ENCODE measurements at regions of chr6 and their contacts with region 1.

Region 1: DNA sequence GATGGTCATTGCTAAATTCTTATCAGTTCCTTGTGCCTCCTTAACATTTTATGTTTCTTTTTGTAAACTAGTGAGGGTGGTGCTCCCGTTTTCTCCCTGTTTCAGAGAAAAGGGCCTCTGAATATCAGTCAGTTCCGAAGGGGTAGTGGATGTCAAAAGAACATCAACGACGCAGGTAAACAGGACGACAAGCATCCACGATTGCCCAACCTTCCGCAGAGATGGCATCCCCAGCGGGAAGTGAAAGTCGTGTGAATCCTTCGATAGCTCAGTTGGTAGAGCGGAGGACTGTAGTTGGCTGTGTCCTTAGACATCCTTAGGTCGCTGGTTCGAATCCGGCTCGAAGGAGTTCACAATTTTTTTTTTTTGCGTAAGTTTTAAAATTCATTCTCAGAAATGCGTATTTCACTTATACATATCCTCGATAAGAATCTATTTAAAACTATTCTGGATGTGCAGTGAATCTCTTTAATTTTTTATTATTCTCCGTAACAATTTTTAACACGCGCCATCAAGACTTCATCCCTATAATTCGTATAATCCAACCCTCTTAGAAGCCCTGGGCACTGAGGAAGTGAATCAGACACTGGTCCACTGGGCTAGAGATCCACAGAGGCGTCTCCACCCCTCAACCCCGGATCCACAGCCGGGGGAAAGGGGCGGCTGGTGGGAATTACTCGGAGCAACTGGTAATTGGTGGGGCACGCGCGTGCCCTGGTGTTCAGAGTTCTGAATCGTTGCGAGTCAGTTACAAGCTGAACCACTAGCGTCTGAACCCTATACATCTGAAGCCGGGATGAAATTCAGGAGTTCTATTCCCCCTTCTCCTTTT is 27.9 kb upstream of the ABT1 start:
- DNase-seq: peak; percentile 96
- H3K4me3 Mint-ChIP-seq: peak overlapping the region; percentile 85
- H3K27ac Mint-ChIP-seq: peak overlapping the region; percentile 76
- H3K4me1 Mint-ChIP-seq: peaks cover 6% of the 10 kb centered on the region
- H3K27me3 Mint-ChIP-seq: no peaks in the 10 kb centered on the region
- CTCF ChIP-seq: no peak

Region 2: DNA sequence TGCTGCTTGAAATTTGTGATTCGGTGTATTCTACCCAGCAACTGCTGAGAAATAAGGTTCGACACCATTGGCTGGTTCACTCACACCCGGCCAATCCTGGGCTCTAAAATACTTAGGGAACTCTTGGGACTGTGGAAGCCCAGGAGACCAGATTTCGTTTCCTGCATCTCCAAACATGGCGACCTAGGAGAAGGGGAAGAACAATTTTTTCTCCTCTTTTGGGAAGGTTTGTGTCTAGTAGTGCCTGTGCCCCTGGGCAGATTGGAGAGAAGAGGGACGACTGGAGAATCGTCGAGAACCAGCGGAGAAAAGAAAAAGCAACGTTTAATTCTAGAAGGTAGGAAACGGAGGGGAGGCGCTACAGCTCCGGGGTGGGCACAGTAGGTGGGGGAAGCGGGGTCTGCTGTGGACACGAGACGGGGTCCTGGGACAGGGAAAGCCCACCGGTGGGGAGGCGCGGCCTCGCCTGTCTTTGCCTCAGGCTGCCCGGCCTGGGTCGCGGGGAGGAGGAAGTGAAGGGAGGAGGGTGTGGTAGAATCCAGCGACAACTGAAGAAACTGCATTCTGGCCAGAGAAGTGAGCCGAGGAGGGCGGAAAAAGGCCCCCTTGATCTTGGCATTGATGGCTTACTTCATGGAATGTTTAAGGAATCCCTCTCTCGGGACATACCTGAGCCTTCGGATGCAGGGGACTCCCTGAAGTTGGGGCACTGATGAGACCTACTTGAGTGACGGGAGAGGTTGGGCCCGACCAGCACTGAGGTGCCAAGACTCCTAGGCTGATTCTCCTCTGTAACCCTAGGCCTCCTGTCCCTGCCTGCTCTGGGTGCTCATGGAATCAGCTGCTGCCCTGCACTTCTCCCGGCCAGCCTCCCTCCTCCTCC is 110.8 kb before region 1 on chr6 and contains the start of gene BTN2A1:
- CTCF ChIA-PET with region 1: no interaction called
- POLR2A ChIA-PET with region 1: no interaction called
- intact Hi-C with region 1: loop called (anchors 5 kb)
- DNase-seq: peak; percentile 94
- H3K4me3 Mint-ChIP-seq: peak within 1 kb of the TSS; percentile 85
- H3K27ac Mint-ChIP-seq: peak within 1 kb of the TSS; percentile 98
- H3K4me1 Mint-ChIP-seq: peaks cover 20% of the 10 kb centered on the region
- H3K27me3 Mint-ChIP-seq: no peaks in the 10 kb centered on the region
- CTCF ChIP-seq: no peak
- total RNA-seq, gene BTN2A1: 14.6 and 16.9 TPM in 2 replicates

Region 3: DNA sequence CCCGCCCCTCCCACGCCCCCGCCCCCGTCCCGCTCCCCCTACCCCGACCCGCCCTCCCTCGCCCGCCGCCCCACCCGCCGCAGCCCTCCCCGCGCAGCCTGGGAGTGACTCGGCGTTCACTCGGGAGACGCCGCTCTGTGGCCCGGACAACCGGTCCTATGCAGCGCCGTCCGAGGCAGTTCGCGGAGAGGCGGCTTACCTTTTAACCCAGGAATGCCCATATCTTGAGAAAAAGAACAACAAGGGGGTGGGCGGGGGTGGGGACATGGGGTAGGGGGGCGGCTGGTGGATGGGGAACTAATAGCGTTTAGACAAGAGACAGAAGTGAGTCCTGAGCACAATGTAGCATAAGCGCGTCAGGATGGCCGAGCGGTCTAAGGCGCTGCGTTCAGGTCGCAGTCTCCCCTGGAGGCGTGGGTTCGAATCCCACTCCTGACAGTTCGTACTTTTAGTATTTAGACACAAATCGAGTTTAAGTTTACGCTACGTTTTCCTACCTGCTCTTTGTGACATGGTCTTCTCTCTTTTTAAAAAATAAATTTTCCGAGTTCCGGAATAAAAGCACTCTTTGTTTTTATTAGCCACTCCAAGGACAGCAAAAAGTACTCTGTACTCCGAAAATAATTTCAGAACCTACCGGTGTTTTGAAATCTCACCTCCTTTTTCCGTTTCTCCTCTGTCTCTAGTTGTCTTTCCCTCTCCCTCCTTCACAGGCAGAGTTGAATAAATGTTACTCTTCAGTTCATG is 47.8 kb before region 1 on chr6:
- CTCF ChIA-PET with region 1: no interaction called
- POLR2A ChIA-PET with region 1: no interaction called
- intact Hi-C with region 1: loop called (anchors 1 kb)
- DNase-seq: peak; percentile 82
- H3K4me3 Mint-ChIP-seq: peak overlapping the region; percentile 66
- H3K27ac Mint-ChIP-seq: peak overlapping the region; percentile 17
- H3K4me1 Mint-ChIP-seq: peaks cover 9% of the 10 kb centered on the region
- H3K27me3 Mint-ChIP-seq: no peaks in the 10 kb centered on the region
- CTCF ChIP-seq: no peak

Region 4: GRCh38 chr6:26553635-26554446 is 15.0 kb before region 1 on chr6:
- CTCF ChIA-PET with region 1: interaction called, 4 read pairs
- POLR2A ChIA-PET with region 1: interaction called, 12 read pairs
- intact Hi-C with region 1: loop called (anchors 1 kb)
- DNase-seq: peak; percentile 95
- H3K4me3 Mint-ChIP-seq: no peak overlapping the region
- H3K27ac Mint-ChIP-seq: no peak overlapping the region
- H3K4me1 Mint-ChIP-seq: peaks cover 21% of the 10 kb centered on the region
- H3K27me3 Mint-ChIP-seq: no peaks in the 10 kb centered on the region
- CTCF ChIP-seq: no peak

Region 5: DNA sequence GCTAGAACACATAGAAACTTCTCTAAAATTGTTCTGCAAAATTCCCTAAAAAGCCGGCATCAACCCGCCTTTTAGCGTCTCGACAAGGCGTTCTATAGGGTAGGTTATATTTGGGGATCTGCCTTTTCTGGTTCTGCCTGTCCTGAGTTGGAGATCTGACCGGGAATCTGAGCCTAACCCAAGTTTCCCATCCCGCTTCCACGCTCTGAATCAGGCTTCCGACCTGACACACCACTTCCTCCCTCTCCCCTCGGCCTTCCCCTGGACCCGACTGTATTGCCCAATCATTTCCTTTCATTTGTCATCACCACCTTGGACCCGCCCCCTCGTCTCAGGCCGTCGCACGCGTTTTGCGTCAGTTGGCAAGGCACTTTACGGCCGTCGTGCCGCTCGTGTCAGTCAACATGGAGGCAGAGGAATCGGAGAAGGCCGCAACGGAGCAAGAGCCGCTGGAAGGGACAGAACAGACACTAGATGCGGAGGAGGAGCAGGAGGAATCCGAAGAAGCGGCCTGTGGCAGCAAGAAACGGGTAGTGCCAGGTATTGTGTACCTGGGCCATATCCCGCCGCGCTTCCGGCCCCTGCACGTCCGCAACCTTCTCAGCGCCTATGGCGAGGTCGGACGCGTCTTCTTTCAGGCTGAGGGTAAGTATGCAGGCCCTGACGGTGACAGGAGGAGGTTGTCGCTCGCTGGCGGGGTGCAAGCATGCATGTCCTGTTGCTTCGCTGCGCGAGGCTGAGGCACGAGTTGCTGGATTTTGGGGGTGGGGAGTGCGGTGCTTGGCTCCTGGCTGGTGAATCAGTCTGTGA is 28.0 kb after region 1 on chr6 and contains the start of gene ABT1:
- CTCF ChIA-PET with region 1: interaction called, 84 read pairs
- POLR2A ChIA-PET with region 1: interaction called, 24 read pairs
- intact Hi-C with region 1: loop called (anchors 1 kb)
- DNase-seq: peak; percentile 99
- H3K4me3 Mint-ChIP-seq: no peak within 1 kb of the TSS
- H3K27ac Mint-ChIP-seq: no peak within 1 kb of the TSS
- H3K4me1 Mint-ChIP-seq: peaks cover 6% of the 10 kb centered on the region
- H3K27me3 Mint-ChIP-seq: no peaks in the 10 kb centered on the region
- CTCF ChIP-seq: no peak
- total RNA-seq, gene ABT1: 11.9 and 12.9 TPM in 2 replicates